Ovary (tissue), 10 donors: ENCODE measurements at regions of chr16 and their contacts with region 1.

Region 1: DNA sequence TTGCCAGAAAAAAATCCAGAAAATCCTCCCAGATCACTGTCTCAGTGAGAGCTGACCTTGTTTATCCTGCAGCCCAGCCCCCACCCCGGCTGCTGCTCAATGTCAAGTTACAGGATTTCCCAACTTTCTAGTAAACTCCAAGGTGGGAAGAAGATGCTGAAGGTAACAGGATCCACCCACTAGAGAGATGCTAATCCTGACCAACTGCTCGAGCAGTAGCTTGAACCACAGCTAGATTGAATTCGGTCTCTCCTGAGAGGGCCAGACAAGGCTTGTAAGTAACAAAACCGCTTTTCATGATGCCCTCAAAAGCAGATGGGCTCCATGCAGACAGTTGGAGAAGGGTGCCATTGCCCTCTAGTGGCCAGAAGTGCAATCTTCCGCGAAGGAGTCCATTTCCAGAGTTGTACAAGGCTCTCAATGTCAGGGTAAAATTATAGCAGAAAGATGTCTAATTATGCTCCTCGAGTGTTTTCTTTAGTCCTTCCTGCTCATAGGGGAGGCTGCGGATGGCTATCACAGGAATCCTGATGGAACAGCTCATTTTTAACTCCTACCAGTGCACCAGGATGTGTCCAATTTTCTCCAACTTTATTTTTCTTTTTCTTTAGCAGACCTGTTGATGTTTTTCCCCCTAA is 3.9 kb downstream of the CDH11 start:
- DNase-seq: peak; percentile 73 to 84 (median 80)
- H3K4me3 ChIP-seq: no peak overlapping the region
- H3K27ac ChIP-seq: no peak overlapping the region
- H3K4me1 ChIP-seq: peaks cover 9% of the 10 kb centered on the region
- H3K27me3 ChIP-seq: no peaks in the 10 kb centered on the region
- CTCF ChIP-seq: peak; percentile 80 to 86 (median 86)
- EP300 ChIP-seq: no peak
- POLR2A ChIP-seq: no peak

Region 2: GRCh38 chr16:64983963-64984362 is 134.0 kb before region 1 on chr16:
- intact Hi-C with region 1: loop called in 1 of 4 experiments (anchors 5 kb)
- DNase-seq: peak; percentile 25 to 45 (median 36)
- H3K4me3 ChIP-seq: no peak overlapping the region
- H3K27ac ChIP-seq: no peak overlapping the region
- H3K4me1 ChIP-seq: peaks cover 5% of the 10 kb centered on the region
- H3K27me3 ChIP-seq: no peaks in the 10 kb centered on the region
- CTCF ChIP-seq: no peak
- EP300 ChIP-seq: no peak
- POLR2A ChIP-seq: no peak

Region 3: GRCh38 chr16:65176603-65177002 is 58.7 kb after region 1 on chr16:
- intact Hi-C with region 1: loop called in 2 of 4 experiments (anchors 5 to 10 kb)
- DNase-seq: peak; percentile 57 to 73 (median 60)
- H3K4me3 ChIP-seq: no peak overlapping the region
- H3K27ac ChIP-seq: peak overlapping the region in 1 of 2 donors; percentile 28
- H3K4me1 ChIP-seq: peaks cover 13% of the 10 kb centered on the region
- H3K27me3 ChIP-seq: no peaks in the 10 kb centered on the region
- CTCF ChIP-seq: no peak
- EP300 ChIP-seq: no peak
- POLR2A ChIP-seq: no peak

Region 4: DNA sequence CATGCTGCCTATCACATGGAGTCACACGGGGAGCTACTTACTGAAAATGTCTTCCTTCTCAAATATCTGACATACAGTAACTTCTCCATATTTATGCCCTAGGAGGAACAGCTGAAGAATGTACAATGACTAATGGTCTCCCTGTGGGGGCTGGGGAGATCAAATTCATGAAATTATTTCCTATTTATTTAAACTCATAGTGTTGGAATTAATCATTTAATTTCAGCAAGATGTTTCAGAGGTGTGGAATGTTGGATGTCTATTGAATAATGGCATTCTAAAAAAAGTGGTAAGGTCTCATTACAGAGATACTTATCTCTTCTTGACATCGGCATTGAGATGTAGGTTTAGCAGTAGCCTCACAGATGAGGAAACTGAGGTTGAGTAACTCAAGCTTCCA is 218.2 kb after region 1 on chr16:
- intact Hi-C with region 1: loop called in 1 of 4 experiments (anchors 10 kb)
- DNase-seq: no peak
- H3K4me3 ChIP-seq: no peak overlapping the region
- H3K27ac ChIP-seq: no peak overlapping the region
- H3K4me1 ChIP-seq: peaks cover 9% of the 10 kb centered on the region
- H3K27me3 ChIP-seq: no peaks in the 10 kb centered on the region
- CTCF ChIP-seq: no peak
- EP300 ChIP-seq: no peak
- POLR2A ChIP-seq: no peak

Region 5: GRCh38 chr16:66266436-66267291 is 1148.7 kb after region 1 on chr16:
- intact Hi-C with region 1: loop called in 2 of 4 experiments (anchors 2 to 10 kb)
- DNase-seq: peak; percentile 64 to 82 (median 76)
- H3K4me3 ChIP-seq: no peak overlapping the region
- H3K27ac ChIP-seq: peak overlapping the region in 1 of 2 donors; percentile 61
- H3K4me1 ChIP-seq: peaks cover 15% of the 10 kb centered on the region
- H3K27me3 ChIP-seq: no peaks in the 10 kb centered on the region
- CTCF ChIP-seq: peak in 1 of 3 donors; percentile 12
- EP300 ChIP-seq: no peak
- POLR2A ChIP-seq: no peak